Common myeloid progenitor, CD34-positive (primary cell): ENCODE measurements at regions of chr5 and their contacts with region 1.

Region 1: GRCh38 chr5:102296178-102296817 is at the start of gene SLCO4C1:
- DNase-seq: peak; percentile 87 to 92 (median 89)
- H3K4me3 ChIP-seq: peak within 1 kb of the TSS; percentile 48 to 86 (median 79)
- H3K27ac ChIP-seq: no peak within 1 kb of the TSS
- H3K4me1 ChIP-seq: peaks cover 0 to 24% (median 20%) of the 10 kb centered on the region in 4 experiments
- H3K27me3 ChIP-seq: no peaks in the 10 kb centered on the region

Region 2: DNA sequence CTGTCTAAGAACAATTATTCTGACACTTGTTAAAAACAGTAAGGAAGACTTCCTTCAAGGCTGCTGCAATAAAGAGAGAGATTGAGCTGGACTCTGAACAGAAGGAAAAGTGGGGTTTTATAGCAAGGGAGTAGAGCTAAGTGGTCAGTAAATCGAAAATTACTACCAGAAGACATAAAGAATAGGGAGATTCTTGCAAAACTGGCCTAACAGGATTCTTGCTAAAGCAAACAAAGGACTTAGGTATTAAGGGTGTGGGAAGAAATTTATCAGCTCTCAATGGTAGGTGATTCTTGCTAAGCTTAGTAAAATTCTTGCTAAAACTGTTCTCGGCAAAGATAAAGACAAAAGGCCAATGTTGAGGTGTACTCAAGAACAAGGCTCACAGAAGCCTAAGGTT is 300.7 kb before region 1 on chr5:
- CTCF ChIA-PET with region 1: no interaction called
- POLR2A ChIA-PET with region 1: no interaction called
- DNase-seq: no peak
- H3K4me3 ChIP-seq: no peak overlapping the region
- H3K27ac ChIP-seq: no peak overlapping the region
- H3K4me1 ChIP-seq: no peaks in the 10 kb centered on the region
- H3K27me3 ChIP-seq: no peaks in the 10 kb centered on the region

Region 3: DNA sequence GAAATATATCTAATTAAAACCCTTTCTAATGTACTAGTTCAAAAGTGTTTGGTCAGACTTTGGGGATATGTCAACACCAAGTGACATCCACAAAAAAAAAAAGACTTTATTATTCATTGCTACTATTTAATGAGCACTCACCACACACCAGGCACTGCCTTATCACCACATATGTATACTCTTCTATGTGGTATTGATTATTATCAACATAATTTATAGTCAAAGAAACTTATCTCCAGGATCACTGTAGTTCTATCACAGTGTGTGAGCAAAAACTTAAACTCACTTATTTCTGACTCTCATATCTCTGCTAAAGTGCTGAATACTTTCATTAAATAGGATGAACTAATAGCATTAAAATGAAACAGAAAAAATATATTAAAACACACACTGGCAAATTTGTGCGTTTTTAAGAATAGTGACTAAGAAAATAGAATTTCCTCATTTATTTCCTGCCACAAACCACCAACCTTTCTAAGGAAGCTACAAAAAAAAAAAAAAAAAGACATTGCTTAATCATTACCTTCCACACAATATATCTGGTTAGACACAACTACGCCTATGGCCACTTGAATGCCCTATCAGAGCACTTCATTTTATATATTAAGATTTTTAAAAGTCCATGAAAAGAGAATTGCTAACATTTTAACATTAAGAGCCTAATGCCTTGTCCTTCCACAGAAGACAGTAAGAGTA is 13.0 kb before region 1 on chr5:
- CTCF ChIA-PET with region 1: interaction called, 35 read pairs
- POLR2A ChIA-PET with region 1: no interaction called
- DNase-seq: peak; percentile 66 to 89 (median 82)
- H3K4me3 ChIP-seq: peak overlapping the region in 3 of 7 experiments; percentile 5 to 54 (median 39)
- H3K27ac ChIP-seq: no peak overlapping the region
- H3K4me1 ChIP-seq: peaks cover 9 to 73% (median 28%) of the 10 kb centered on the region in 4 experiments
- H3K27me3 ChIP-seq: no peaks in the 10 kb centered on the region

Region 4: GRCh38 chr5:102312586-102312985 is 16.3 kb after region 1 on chr5:
- CTCF ChIA-PET with region 1: interaction called, 16 read pairs
- POLR2A ChIA-PET with region 1: interaction called, 3 read pairs
- DNase-seq: peak in 2 of 3 donors; percentile 17 to 29
- H3K4me3 ChIP-seq: no peak overlapping the region
- H3K27ac ChIP-seq: no peak overlapping the region
- H3K4me1 ChIP-seq: peaks cover 13 to 23% (median 15%) of the 10 kb centered on the region in 4 experiments
- H3K27me3 ChIP-seq: no peaks in the 10 kb centered on the region